ENCODE measurements at regions of chr10 and their contacts with region 1.

Region 1: GRCh38 chr10:97292097-97292862 is at the start of gene ARHGAP19:
- DNase-seq: peak; percentile 99
- H3K4me3 ChIP-seq: peak within 1 kb of the TSS; percentile 95 to 98 (median 97)
- H3K27ac ChIP-seq: peak within 1 kb of the TSS; percentile 95 to 99 (median 98)
- H3K4me1 ChIP-seq: peaks cover 9 to 11% (median 11%) of the 10 kb centered on the region in 4 donors
- H3K27me3 ChIP-seq: no peaks in the 10 kb centered on the region
- CTCF ChIP-seq: peak in 1 of 3 experiments; percentile 12
- EP300 ChIP-seq: no peak
- POLR2A ChIP-seq: no peak
- total RNA-seq, gene ARHGAP19: 3.5 to 5.4 (median 4.6) TPM

Region 2: DNA sequence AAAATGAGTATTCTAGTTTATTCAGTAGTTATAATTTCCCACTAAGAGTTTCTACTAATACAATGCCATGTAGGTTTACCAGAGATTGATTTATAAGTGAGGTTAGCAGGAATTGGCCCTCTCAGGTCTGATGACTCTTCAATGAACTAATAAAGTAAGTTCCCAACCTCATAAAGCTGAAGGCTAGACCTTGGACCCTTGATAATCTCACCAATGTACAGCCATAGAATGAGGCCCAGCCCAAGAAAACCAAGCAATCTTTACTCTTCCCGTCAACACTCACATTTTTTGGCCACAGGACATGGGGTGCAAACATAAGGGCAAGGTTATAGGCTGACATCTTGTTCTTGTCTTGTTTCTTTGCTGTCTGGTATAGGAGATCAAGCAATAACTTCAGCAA is 33.2 kb before region 1 on chr10:
- intact Hi-C with region 1: no loop called
- DNase-seq: no peak
- H3K4me3 ChIP-seq: no peak overlapping the region
- H3K27ac ChIP-seq: no peak overlapping the region
- H3K4me1 ChIP-seq: no peaks in the 10 kb centered on the region
- H3K27me3 ChIP-seq: no peaks in the 10 kb centered on the region
- CTCF ChIP-seq: no peak
- EP300 ChIP-seq: no peak
- POLR2A ChIP-seq: no peak

Region 3: DNA sequence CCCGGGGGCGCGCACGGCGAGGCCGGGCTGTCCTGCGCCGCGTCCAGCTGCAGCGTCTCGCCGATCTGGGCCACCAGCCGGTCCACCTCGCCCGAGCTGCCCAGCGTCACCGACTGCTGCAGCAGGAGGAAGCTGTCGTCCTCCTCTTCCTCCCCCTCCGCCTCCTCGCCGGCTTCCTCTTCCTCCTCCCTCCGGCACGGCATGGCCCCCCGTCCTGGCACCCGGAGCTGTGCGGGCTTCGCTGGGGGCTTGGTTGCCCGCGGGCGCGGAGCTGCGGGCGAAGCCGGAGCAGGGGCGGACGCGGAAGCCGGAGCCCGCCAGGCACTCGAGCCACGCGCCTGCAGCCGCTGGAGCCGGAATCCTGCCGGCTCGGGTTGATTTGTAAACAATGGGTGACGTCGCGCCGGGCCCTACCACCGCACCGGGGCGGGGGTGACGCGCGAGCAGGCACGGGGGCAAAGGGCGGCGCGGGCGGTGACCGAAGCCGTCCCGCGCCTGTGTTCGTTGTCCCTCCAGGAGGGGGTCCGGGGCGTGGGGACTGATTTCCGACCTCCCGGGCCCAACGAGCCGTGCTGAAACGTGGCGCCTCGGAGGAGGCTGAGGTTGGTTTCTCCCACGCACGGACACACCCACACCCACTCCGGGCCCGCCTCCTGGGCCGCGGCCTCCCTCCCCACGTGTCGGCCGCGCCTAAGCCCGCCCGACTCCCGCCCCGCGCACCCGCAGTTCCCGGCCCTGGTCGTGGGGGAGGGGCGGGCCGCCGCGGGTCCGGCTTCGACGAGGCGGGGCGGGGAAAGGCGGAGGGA is 42.3 kb after region 1 on chr10 and contains the start of gene FRAT2:
- intact Hi-C with region 1: loop called (anchors 5 kb)
- DNase-seq: peak; percentile 97
- H3K4me3 ChIP-seq: peak within 1 kb of the TSS; percentile 77 to 91 (median 84)
- H3K27ac ChIP-seq: peak within 1 kb of the TSS; percentile 83 to 97 (median 91)
- H3K4me1 ChIP-seq: peaks cover 44 to 73% (median 71%) of the 10 kb centered on the region in 4 donors
- H3K27me3 ChIP-seq: no peaks in the 10 kb centered on the region
- CTCF ChIP-seq: peak in 1 of 3 experiments; percentile 17
- EP300 ChIP-seq: no peak
- POLR2A ChIP-seq: peak; percentile 74
- total RNA-seq, gene FRAT2: 18.7 to 27.8 (median 19.6) TPM

Region 4: DNA sequence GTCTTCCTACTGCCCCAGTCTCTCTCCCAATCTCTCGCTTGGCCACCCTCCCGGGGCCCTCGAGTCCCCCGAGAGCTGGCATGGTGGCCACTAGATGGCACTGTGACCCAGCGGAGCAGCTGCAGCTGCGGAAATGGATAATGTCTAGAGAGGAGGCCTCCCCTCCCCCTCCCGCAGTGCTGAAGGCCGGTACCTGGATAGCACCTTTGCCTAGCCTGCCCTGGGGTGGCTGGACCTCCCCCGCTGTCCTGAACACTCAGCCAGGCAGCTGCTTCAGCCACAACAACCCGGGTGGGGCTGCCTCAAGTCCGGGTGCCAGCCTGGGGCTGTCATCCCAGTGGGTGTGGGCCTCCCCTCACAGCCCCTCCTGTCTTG is 622.5 kb after region 1 on chr10:
- intact Hi-C with region 1: no loop called
- DNase-seq: no peak
- H3K4me3 ChIP-seq: peak overlapping the region in 2 of 4 donors; percentile 10 to 28
- H3K27ac ChIP-seq: no peak overlapping the region
- H3K4me1 ChIP-seq: peaks cover 14 to 22% (median 19%) of the 10 kb centered on the region in 4 donors
- H3K27me3 ChIP-seq: peaks cover 0 to 48% (median 0%) of the 10 kb centered on the region in 4 donors
- CTCF ChIP-seq: peak; percentile 86 to 91 (median 91)
- EP300 ChIP-seq: no peak
- POLR2A ChIP-seq: no peak

Measured in esophagus muscularis mucosa (tissue), 4 donors.